ENCODE measurements at regions of chr22 and their contacts with region 1.

Region 1: DNA sequence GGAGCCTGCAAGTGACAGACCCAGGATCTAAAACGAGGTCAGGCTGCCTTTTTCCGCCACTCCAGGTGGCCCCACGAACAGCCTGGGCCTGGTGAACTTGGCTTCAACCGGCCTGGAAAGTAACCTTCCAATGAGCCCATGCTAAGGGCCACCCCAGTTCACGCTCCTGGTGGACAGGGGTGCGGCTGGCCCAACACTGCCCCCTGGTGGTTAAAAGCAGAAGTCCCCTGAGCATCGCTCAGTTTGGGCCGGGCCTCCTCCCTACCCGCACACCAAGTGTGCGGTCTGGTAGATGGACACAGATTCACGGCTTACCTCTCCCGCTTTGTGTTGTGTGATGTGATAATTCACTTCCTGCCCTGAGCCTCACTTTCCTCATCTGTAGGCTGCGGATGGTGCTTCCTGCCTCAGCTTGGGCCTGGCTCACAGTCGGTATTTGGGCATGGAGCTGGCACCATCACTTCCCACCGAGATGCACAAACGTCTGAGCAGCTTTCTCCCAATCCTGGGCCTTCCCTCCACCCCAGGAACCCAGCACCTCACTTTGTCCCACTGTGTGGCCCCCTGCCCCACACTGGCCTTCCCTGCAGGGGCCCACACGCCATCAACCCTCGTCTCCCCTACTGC is 13.7 kb upstream of the SEC14L3 start:
- DNase-seq: no peak
- H3K4me3 ChIP-seq: no peak overlapping the region
- H3K27ac ChIP-seq: no peak overlapping the region
- H3K4me1 ChIP-seq: peaks cover 0 to 7% (median 2%) of the 10 kb centered on the region in 4 donors
- H3K27me3 ChIP-seq: peaks cover 0 to 18% (median 0%) of the 10 kb centered on the region in 4 donors
- CTCF ChIP-seq: peak in 2 of 3 experiments; percentile 90 to 96
- EP300 ChIP-seq: no peak
- POLR2A ChIP-seq: no peak

Region 2: GRCh38 chr22:30104501-30105156 is 380.8 kb before region 1 on chr22:
- intact Hi-C with region 1: loop called (anchors 10 kb)
- DNase-seq: no peak
- H3K4me3 ChIP-seq: no peak overlapping the region
- H3K27ac ChIP-seq: no peak overlapping the region
- H3K4me1 ChIP-seq: no peaks in the 10 kb centered on the region
- H3K27me3 ChIP-seq: peaks cover 0 to 5% (median 0%) of the 10 kb centered on the region in 4 donors
- CTCF ChIP-seq: no peak
- EP300 ChIP-seq: no peak
- POLR2A ChIP-seq: no peak

Region 3: DNA sequence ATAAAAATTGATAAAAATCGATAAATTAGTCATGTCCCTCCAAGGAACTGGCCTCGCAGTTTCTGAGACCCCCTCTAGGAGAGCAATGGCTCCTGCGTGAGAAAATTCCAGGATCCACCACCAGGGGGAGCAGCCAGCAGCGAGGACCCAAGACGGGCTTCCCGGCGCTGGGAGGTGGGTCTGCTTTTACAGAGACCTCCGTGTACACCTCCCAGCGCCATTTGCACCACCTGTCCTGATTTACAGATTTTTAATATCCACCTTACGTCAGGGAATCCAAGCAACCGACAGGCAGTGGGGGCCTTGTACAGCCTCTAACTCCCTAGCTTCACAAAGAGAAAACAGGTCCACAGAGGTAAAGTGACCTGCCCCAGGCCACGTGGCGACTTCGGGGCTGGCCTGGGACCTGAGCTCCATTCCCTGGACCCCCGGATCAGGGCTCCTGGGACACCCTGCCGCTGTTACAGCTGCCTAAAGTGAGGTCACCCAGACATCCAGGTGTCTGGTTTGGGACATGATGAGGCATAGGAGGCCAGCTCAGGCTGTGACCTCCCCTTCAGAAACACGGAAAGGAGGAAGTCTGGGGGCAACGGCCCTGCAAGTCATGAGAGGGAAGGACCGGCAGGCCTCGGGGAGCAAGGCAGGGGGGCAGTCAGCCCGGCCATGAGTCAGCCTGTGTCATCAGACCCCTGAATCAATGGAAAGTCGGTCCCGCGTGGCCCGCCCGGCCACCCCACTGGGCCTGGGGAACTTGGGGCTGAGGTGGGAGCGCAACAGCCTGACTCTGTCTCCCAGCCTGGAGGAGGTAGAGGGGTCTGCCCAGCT is 222.3 kb before region 1 on chr22:
- intact Hi-C with region 1: loop called (anchors 10 kb)
- DNase-seq: no peak
- H3K4me3 ChIP-seq: peak overlapping the region; percentile 5 to 45 (median 32)
- H3K27ac ChIP-seq: no peak overlapping the region
- H3K4me1 ChIP-seq: peaks cover 5 to 14% (median 12%) of the 10 kb centered on the region in 4 donors
- H3K27me3 ChIP-seq: peaks cover 0 to 4% (median 0%) of the 10 kb centered on the region in 4 donors
- CTCF ChIP-seq: peak; percentile 95 to 99 (median 98)
- EP300 ChIP-seq: no peak
- POLR2A ChIP-seq: no peak

Region 4: DNA sequence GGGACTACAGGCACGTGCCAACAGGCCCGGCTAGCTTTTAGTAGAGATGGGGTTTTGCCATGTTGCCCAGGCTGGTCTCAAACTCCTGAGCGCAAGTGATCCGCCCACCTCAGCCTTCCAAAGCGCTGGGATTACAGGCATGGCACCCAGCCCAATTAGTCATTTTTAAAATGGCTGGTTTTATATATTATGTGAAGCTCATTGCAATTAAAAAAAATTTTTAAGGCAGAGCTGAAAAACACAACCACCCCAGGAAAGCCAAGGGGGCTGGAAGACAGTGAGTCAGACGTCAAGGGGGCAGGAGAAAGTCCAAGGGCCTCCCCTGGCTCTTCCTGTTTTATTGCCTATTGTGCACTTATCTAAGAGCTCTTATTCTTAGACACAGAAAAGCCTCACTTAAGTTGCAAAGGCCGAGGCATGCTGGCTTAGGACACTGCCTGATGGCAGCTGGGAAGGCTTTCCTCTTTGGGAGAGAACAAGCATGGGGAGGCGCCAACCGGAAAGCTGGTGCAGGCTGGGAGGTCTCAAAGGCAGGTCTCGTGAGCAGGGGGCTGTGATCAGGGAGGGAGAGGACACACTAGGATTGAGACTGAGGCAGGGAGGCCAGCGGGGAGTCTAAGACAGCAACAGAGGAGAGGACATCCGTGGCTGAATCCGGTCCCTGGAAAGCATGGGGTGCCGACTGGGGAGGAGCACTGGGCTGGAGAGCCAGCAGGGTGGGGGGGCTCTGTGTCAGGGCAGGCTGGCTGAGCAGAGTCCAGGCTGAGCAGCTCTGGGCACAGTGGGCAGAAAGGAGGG is 207.7 kb before region 1 on chr22:
- intact Hi-C with region 1: no loop called
- DNase-seq: no peak
- H3K4me3 ChIP-seq: no peak overlapping the region
- H3K27ac ChIP-seq: peak overlapping the region in 3 of 4 donors; percentile 40 to 65 (median 57)
- H3K4me1 ChIP-seq: peaks cover 9 to 20% (median 13%) of the 10 kb centered on the region in 4 donors
- H3K27me3 ChIP-seq: no peaks in the 10 kb centered on the region
- CTCF ChIP-seq: no peak
- EP300 ChIP-seq: no peak
- POLR2A ChIP-seq: no peak

Region 5: GRCh38 chr22:30392661-30393321 is 92.7 kb before region 1 on chr22:
- intact Hi-C with region 1: loop called (anchors 2 kb)
- DNase-seq: no peak
- H3K4me3 ChIP-seq: no peak overlapping the region
- H3K27ac ChIP-seq: no peak overlapping the region
- H3K4me1 ChIP-seq: peaks cover 13 to 23% (median 18%) of the 10 kb centered on the region in 4 donors
- H3K27me3 ChIP-seq: no peaks in the 10 kb centered on the region
- CTCF ChIP-seq: no peak
- EP300 ChIP-seq: no peak
- POLR2A ChIP-seq: no peak

Measured in esophagus muscularis mucosa (tissue), 4 donors.